Naive thymus-derived CD8-positive, alpha-beta T cell (primary cell): ENCODE measurements at regions of chr1 and their contacts with region 1.

Region 1: DNA sequence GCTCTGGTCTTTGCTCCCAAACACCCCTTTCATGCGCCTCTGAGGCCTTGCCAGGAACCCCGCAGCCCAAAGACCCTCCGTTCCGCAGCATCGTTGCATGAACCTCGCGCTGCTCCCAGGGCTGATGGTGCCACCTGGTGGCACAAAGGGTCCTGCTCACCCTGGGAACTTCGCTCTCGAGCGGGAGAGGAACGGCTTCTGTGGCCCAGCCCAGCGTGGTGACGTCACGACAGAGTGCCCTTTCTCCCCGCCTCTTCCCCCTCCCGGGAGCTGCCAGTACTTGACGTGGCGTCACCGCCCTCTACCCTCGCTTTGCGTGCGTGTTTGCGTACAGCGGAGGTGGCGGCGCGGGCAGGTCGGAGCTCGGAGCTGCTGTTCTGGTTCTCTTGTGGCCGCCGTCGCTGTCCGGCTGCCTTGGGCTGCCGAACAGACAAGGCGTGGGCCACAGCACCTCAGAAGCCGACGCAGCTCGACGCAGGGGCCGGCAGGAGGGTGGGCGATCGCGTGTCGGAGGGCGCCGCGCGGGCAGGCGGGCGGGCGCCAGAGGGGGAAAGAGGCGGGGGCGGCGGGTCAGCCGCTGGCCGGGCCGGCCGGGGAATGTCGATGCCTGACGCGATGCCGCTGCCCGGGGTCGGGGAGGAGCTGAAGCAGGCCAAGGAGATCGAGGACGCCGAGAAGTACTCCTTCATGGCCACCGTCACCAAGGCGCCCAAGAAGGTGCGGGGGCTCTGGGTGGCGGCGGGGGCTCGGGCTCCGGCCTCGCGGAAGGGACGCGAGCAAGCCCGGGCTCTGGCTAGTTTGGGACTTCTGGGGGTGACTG is at the start of gene AHCYL1:
- DNase-seq: peak; percentile 96 to 99 (median 99)
- ATAC-seq: peak; percentile 96 to 99
- H3K4me3 Mint-ChIP-seq: peak within 1 kb of the TSS; percentile 96 to 99 (median 98)
- H3K27ac Mint-ChIP-seq: peak within 1 kb of the TSS; percentile 91 to 100 (median 98)
- H3K4me1 Mint-ChIP-seq: peaks cover 22 to 50% (median 45%) of the 10 kb centered on the region in 4 donors
- H3K27me3 Mint-ChIP-seq: peaks cover 0 to 1% (median 0%) of the 10 kb centered on the region in 5 donors
- polyA plus RNA-seq, gene AHCYL1: 36.8 to 38.6 (median 38.1) TPM

Region 2: DNA sequence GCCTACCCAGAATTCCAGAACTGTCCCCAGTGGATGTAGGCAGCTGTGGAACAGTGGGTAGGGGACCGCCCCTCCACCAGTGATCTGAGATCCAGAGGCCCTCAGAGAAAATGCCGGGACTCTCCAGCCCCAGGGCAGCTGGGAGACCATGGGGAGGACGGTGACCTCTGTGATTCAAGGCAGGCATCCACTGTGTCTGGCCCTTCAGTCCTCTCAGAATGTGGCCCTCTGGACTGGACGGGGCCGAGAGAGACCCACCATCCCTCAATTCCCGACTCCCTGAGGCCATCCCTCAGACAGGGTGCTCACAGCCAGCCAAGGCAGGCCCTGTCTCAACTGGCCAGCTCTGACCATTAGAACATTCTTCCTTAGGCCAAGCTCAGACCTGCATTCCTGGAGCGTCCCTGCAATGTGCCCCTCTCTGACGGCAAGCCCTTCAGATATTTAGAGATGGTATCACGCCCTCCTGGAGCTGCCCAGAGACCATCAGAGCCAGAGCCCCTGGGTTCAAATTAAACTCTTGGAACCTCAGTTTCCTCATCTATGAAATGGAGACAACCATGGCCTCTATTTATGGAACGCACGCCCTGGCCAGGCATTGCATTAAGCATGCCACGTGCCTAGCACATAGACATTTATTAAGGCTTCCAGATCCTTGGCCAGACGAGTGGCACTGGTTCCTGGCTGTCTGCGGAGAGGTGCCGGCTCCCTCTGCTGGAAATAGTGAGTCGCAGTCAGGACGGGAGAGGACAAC is 211.3 kb before region 1 on chr1:
- POLR2A ChIA-PET with region 1: interaction called, 32 read pairs
- DNase-seq: peak; percentile 43 to 85 (median 67)
- ATAC-seq: peak; percentile 94 to 95
- H3K4me3 Mint-ChIP-seq: no peak overlapping the region
- H3K27ac Mint-ChIP-seq: peak overlapping the region in 2 of 10 donors; percentile 16 to 46
- H3K4me1 Mint-ChIP-seq: peaks cover 4 to 17% (median 8%) of the 10 kb centered on the region in 4 donors
- H3K27me3 Mint-ChIP-seq: peaks cover 0 to 23% (median 1%) of the 10 kb centered on the region in 5 donors

Region 3: GRCh38 chr1:109790735-109791494 is 193.8 kb before region 1 on chr1:
- POLR2A ChIA-PET with region 1: interaction called, 16 read pairs
- DNase-seq: peak; percentile 44 to 90 (median 70)
- ATAC-seq: peak; percentile 94 to 95
- H3K4me3 Mint-ChIP-seq: peak overlapping the region in 9 of 10 donors; percentile 28 to 70 (median 49)
- H3K27ac Mint-ChIP-seq: peak overlapping the region; percentile 80 to 91 (median 88)
- H3K4me1 Mint-ChIP-seq: peaks cover 19 to 69% (median 65%) of the 10 kb centered on the region in 4 donors
- H3K27me3 Mint-ChIP-seq: no peaks in the 10 kb centered on the region

Region 4: DNA sequence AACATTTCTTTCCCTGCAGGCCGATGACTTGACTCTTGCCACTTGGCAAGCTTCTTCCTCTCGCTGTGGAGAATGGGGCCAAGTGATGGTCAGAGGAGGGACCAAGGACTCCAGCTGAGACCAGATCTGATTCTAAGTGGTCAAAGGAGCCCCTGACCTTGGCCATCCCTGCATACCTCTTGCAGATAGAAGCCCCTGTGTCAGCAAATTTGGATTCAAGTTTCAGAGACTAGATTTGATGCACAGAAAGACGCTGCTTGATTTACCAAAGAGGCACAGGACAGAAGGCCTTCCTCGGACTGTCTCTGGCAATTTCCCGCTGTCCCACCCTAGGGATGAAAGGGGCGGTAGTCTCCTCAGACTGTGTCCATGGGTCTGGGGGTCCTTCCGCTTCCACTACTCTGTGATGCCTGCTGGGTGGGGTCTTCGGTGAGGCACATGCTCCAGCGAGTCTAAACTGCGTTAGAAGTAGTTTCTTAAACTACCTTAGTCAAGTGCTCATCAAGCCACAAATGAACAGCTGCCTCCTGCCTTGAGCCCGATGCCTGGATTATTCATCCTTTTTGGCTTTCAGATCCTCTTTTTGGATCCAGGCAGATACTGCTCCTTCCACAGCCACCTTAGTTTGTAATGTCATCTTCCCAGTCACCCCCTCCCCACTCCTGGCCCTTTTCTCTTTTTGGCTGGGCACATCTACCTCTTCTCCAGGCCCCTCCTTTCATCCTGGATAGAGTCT is 322.7 kb after region 1 on chr1:
- POLR2A ChIA-PET with region 1: no interaction called
- DNase-seq: no peak
- ATAC-seq: no peak
- H3K4me3 Mint-ChIP-seq: no peak overlapping the region
- H3K27ac Mint-ChIP-seq: peak overlapping the region in 1 of 10 donors; percentile 22
- H3K4me1 Mint-ChIP-seq: peaks cover 0 to 1% (median 0%) of the 10 kb centered on the region in 4 donors
- H3K27me3 Mint-ChIP-seq: peaks cover 0 to 11% (median 2%) of the 10 kb centered on the region in 5 donors

Region 5: DNA sequence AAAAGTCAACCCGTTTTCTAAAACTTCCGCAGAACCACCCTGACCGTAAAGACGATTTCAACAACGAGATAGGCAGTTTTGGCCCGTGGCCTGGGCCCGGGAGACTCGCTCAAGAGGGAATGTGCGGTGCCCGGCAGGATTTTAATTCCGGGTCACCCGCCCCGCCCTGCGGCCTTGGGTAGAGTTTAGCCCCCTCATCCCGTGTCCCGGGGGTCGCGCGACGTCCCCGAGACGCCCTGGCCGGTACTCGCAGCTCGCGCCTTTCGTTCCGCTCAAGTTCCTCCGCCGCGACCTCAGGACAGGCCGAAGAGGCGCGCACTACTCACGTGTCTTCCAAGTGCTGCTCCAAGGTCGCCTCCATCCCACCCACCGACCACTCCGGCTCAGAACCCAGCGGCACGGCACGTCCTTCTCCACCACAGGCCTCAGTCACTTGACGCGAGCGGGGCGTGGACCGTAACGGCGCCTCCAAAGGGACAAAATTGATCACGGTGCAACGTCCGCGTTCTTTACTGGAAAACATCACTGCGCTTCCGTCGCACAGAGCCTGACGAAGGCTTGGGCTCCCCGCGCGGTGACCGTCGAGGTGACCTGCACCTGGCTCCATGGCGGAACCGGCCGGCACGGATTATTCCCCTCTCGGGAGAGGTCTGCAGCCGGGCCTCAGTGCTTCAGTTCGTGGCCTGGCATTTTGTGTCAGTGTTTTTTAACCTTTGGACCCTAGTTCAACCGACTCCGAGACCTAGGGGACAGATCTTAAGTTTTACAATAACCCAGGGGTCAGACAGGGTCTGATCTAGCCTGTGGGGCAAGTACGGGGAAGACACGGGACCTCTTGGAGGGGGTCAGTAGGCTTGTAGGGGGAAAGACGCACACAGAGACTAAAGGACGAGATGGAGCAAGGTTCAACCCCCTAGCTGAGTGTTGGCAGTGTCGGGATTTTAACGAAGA is 422.9 kb after region 1 on chr1 and contains the start of gene LAMTOR5:
- POLR2A ChIA-PET with region 1: interaction called, 10 read pairs
- DNase-seq: peak; percentile 78 to 96 (median 88)
- ATAC-seq: peak; percentile 93 to 95
- H3K4me3 Mint-ChIP-seq: peak within 1 kb of the TSS; percentile 95 to 100 (median 99)
- H3K27ac Mint-ChIP-seq: peak within 1 kb of the TSS; percentile 98 to 100 (median 100)
- H3K4me1 Mint-ChIP-seq: peaks cover 10 to 33% (median 24%) of the 10 kb centered on the region in 4 donors
- H3K27me3 Mint-ChIP-seq: no peaks in the 10 kb centered on the region
- polyA plus RNA-seq, gene LAMTOR5: 192 to 262 (median 247) TPM